Psoas muscle (tissue), 8 donors: ENCODE measurements at regions of chr16 and their contacts with region 1.

Region 1: DNA sequence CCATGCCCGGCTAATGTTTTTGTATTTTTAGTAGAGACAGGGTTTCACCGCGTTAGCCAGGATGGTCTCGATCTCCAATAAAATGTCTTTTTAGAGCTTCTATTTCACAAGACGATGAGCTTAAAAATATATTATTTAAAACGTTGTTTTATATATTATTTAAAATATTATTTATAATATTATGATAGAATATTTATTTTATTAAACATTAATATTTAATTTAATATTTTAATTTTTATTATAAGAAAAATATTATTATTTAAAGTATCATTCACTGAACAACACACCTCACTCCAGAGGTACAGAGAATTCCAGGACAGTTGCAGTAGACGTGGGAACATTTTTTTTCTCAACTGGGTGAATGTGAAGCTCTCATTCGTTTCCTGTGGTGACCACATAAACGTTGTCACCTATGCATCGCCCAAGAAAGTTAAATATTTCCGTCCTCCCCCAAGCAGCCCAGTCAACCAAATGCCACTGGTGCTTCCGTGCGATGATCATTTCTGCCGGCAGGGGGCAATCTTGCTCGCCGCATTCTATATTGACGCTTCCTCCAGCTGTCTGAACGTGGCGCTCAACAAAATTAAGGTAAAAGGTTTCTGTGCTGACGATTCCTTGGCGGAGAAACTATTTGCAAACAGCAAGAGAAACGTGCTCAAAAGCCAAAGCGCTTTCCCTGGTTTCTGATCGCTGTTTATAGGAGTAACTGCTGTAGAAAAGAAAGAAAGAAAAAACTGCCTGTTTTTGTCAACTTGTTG is 41.7 kb upstream of the PRSS54 start:
- DNase-seq: peak; percentile 80 to 85
- ATAC-seq: peak; percentile 73 to 93 (median 80)
- H3K4me3 ChIP-seq: peak overlapping the region; percentile 48
- H3K27ac ChIP-seq: no peak overlapping the region
- H3K4me1 ChIP-seq: no peaks in the 10 kb centered on the region
- H3K27me3 ChIP-seq: no peaks in the 10 kb centered on the region
- CTCF ChIP-seq: peak; percentile 94

Region 2: DNA sequence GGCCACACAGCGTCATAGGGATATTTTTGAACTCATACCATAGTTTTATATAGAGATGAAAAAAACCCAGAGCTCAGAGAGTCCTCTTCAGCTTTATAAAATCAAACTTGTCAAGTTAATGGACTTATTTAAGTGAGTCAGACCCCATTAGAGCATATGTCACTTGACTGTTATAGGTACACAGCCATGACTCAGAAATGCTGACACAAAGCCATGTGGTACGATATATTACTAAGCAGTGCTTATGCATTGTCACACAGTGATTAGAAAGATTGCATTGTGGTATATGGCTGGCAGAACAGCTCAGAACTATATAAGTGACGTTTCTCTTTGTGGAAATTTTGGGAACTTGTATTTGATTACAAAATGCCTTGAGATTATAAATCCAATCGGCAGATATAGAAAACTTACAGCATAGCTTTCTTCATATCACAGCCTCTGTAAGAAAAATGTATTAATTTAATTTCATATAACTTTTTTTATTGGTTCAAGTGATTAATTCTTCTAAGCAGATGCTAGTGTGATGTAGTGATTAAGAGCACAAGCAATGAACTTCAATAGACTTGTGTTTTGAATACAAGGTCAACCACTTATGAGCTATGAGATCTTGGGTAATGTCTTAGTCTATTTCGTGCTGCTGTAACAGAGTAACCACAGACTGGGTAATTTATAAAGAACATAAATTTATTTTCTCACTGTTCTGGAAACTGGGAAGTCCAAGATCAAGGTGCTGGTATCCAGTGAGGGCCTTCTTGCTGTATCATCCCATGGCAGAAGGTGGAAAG is 29.9 kb after region 1 on chr16:
- intact Hi-C with region 1: no loop called
- DNase-seq: no peak
- ATAC-seq: no peak
- H3K4me3 ChIP-seq: no peak overlapping the region
- H3K27ac ChIP-seq: no peak overlapping the region
- H3K4me1 ChIP-seq: no peaks in the 10 kb centered on the region
- H3K27me3 ChIP-seq: peaks cover 0 to 3% (median 0%) of the 10 kb centered on the region in 3 donors
- CTCF ChIP-seq: no peak

Region 3: DNA sequence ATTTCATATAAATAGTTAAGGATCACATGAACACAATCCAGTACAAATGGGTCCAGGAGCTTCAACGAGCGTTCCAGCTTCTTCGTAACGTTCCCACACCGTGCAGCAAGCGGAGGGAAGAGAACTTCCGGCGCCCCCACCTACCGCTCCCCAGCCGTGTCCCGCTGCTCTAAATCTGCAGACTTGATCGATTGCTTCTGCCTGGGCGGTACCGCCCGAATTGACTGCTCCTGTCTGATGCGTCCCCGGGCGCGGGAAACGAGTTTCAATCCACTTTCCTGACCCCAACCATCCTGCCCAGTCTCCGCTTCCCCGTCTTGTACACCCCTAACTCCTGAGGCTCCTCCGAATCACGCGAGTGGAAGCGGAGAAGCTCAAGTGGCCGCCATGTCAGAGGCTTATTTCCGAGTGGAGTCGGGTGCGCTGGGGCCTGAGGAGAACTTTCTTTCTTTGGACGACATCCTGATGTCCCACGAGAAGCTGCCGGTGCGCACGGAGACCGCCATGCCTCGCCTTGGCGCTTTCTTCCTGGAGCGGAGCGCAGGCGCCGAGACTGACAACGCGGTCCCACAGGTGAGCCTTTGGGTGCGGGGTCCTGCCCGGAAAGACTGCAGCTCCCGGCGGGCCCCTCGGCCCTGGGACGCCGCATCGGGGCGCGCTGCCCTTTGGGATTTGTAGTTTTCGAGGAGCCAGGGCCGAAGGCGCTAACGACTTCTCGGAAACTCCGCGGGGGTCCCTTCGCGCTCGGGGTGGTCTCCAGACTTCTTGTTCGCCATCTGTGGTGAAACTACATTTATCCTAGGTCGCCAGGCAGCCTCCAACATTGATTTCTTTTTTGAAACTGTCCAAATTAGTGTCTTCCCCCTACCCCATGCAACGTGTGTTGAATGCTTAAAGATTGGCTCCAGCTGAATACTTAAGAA is 56.0 kb after region 1 on chr16 and contains the start of gene GINS3:
- intact Hi-C with region 1: loop called in 1 of 2 experiments (anchors 5 kb)
- DNase-seq: peak; percentile 89 to 91
- ATAC-seq: peak; percentile 93 to 99 (median 98)
- H3K4me3 ChIP-seq: peak within 1 kb of the TSS; percentile 83
- H3K27ac ChIP-seq: peak within 1 kb of the TSS; percentile 53
- H3K4me1 ChIP-seq: peaks cover 4% of the 10 kb centered on the region
- H3K27me3 ChIP-seq: peaks cover 0 to 6% (median 0%) of the 10 kb centered on the region in 3 donors
- CTCF ChIP-seq: no peak
- total RNA-seq, gene GINS3: 0.86 to 1.6 (median 1.2) TPM

Region 4: DNA sequence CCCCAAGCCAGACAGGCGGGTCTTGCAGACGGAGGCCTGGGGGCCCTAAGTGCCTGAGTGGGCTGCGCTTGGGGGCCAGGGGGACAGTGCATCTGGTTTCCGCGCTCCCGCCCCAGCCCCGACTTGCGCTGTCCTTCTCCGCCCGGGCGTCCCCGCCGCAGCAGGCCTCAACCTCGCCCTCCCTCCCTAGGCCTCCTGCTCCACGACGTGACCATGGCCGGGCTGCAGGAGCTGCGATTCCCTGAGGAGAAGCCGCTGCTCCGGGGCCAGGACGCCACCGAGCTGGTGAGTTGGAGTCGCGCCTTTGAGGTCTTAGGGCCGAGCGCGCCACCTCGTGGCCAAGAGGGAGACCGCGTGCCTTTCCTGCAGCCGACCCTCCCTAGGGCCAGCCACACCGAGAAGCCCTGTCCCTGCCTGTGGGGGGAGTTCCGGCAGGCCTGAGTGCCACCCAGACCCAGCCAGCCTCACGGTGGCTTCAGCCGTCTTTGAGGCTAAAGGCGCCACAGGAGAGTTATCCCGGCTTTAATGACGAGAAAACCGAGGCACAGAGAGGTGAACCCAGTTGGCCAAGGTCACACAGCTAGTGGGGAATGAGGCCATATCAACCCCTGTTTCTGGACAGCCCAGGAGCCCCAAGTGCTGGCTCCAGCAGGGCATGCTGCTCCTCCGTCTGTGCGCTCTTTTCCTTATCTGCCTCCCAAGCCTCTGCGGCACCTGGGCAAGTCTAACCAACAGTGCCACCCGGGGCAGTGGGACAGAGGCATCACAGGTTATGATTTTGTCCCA is 151.2 kb after region 1 on chr16:
- intact Hi-C with region 1: loop called (anchors 2 kb)
- DNase-seq: peak; percentile 82 to 91
- ATAC-seq: peak; percentile 88 to 97 (median 92)
- H3K4me3 ChIP-seq: peak overlapping the region; percentile 26
- H3K27ac ChIP-seq: no peak overlapping the region
- H3K4me1 ChIP-seq: no peaks in the 10 kb centered on the region
- H3K27me3 ChIP-seq: no peaks in the 10 kb centered on the region
- CTCF ChIP-seq: peak; percentile 87

Region 5: GRCh38 chr16:58661199-58661830 is 324.8 kb after region 1 on chr16:
- intact Hi-C with region 1: loop called (anchors 1 to 5 kb)
- DNase-seq: peak; percentile 54 to 68
- ATAC-seq: peak; percentile 98 to 99 (median 99)
- H3K4me3 ChIP-seq: no peak overlapping the region
- H3K27ac ChIP-seq: no peak overlapping the region
- H3K4me1 ChIP-seq: no peaks in the 10 kb centered on the region
- H3K27me3 ChIP-seq: no peaks in the 10 kb centered on the region
- CTCF ChIP-seq: peak; percentile 59